ENCODE measurements at regions of chr20 and their contacts with region 1.

Region 1: GRCh38 chr20:32357869-32358631 is at the start of gene ASXL1:
- DNase-seq: peak; percentile 96
- H3K4me3 Mint-ChIP-seq: peak within 1 kb of the TSS; percentile 99
- H3K27ac Mint-ChIP-seq: peak within 1 kb of the TSS; percentile 100
- H3K4me1 Mint-ChIP-seq: peaks cover 59% of the 10 kb centered on the region
- H3K27me3 Mint-ChIP-seq: no peaks in the 10 kb centered on the region
- total RNA-seq, gene ASXL1: 141 and 145 TPM in 2 replicates

Region 2: DNA sequence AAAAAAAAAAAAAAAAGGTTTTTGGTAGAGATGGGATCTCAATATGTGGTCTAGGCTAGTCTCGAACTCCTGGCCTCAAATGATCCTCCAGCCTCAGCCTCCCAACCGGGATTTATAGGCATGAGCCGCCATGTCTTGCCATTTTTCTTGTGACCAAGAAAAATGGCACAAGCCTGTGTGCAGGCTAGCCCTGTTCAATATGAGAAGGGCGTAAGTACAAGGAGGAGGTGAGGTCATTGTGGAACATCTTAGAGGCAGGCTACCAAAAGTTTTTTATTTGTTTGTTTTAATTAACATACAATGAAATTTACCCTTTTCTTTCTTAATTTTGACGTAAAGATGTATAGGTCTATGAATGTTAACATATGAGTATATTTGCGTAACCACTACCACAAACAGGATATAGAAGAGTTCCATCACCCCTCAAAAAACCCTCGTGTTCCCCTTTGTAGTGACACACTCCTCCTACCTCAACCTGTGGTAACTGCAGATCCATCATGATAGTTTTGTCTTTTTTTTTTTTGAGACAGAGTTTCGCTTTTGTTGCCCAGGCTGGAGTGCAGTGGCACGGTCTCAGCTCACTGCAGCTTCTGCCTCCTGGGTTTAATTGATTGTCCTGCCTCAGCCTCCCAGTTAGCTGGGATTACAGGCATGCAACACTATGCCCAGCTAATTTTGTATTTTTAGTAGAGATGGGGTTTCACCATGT is 108.9 kb before region 1 on chr20:
- intact Hi-C with region 1: loop called (anchors 1 kb)
- DNase-seq: peak; percentile 46
- H3K4me3 Mint-ChIP-seq: no peak overlapping the region
- H3K27ac Mint-ChIP-seq: peak overlapping the region; percentile 96
- H3K4me1 Mint-ChIP-seq: peaks cover 50% of the 10 kb centered on the region
- H3K27me3 Mint-ChIP-seq: no peaks in the 10 kb centered on the region

Region 3: GRCh38 chr20:32333988-32334885 is 23.8 kb before region 1 on chr20:
- intact Hi-C with region 1: loop called (anchors 1 kb)
- DNase-seq: no peak
- H3K4me3 Mint-ChIP-seq: peak overlapping the region; percentile 26
- H3K27ac Mint-ChIP-seq: peak overlapping the region; percentile 81
- H3K4me1 Mint-ChIP-seq: peaks cover 46% of the 10 kb centered on the region
- H3K27me3 Mint-ChIP-seq: no peaks in the 10 kb centered on the region

Region 4: GRCh38 chr20:32484958-32485769 is 127.1 kb after region 1 on chr20:
- intact Hi-C with region 1: loop called (anchors 1 kb)
- DNase-seq: peak; percentile 76
- H3K4me3 Mint-ChIP-seq: peak overlapping the region; percentile 89
- H3K27ac Mint-ChIP-seq: peak overlapping the region; percentile 85
- H3K4me1 Mint-ChIP-seq: peaks cover 9% of the 10 kb centered on the region
- H3K27me3 Mint-ChIP-seq: no peaks in the 10 kb centered on the region